PC-3 (cell line): ENCODE measurements at regions of chr3 and their contacts with region 1.

Region 1: DNA sequence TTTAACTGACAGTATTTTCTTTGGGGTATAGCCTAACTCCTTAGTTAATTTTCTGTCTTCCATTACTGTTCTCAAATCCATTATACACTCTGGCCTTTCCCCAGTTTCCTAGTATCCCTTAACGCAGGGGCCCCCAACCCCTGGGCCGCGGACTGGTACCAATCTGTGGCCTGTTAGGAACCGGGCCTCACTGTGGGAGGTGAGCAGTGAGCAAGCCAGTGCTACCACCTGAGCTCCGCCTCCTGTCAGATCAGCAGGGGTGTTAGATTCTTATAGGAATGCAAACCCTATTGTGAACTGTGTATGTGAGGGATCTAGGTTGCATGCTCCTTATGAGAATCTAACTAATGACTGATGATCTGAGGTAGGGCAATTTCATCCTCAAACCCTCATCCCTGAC is 75.1 kb downstream of the DOCK3 start:
- DNase-seq: no peak
- ATAC-seq: no peak
- H3K4me3 ChIP-seq: no peak overlapping the region
- H3K27ac ChIP-seq: no peak overlapping the region
- H3K4me1 ChIP-seq: no peaks in the 10 kb centered on the region
- H3K27me3 ChIP-seq: 0 out of 2 replicates have a peak, but pooled peaks cover 8% of the 10 kb centered on the region
- CTCF ChIP-seq: no peak

Region 2: GRCh38 chr3:50687127-50687751 is 62.6 kb before region 1 on chr3:
- CTCF ChIA-PET with region 1: no interaction called
- POLR2A ChIA-PET with region 1: no interaction called
- intact Hi-C with region 1: no loop called
- DNase-seq: no peak
- ATAC-seq: no peak
- H3K4me3 ChIP-seq: no peak overlapping the region
- H3K27ac ChIP-seq: no peak overlapping the region
- H3K4me1 ChIP-seq: no peaks in the 10 kb centered on the region
- H3K27me3 ChIP-seq: peaks cover 54% of the 10 kb centered on the region
- CTCF ChIP-seq: no peak

Region 3: DNA sequence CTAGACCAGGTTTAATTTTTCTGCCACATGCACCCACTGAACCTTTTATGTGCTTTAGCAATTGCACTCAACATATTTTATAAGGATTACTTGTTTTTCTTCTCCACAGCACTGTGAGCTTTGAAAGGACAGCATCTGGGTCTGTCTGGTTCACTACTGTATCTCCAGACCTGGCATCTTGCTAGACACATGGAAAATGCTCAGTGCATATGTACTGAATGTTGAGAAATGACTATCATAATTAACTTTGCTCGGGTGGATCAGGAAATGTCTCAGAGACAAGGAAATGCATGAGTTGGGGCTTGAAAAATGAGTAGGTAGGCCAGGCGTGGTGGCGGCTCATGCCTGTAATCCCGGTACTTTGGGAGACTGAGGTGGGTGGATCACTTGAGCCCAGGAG is 34.9 kb before region 1 on chr3:
- CTCF ChIA-PET with region 1: no interaction called
- POLR2A ChIA-PET with region 1: interaction called, 15 read pairs
- intact Hi-C with region 1: no loop called
- DNase-seq: no peak
- ATAC-seq: no peak
- H3K4me3 ChIP-seq: no peak overlapping the region
- H3K27ac ChIP-seq: no peak overlapping the region
- H3K4me1 ChIP-seq: no peaks in the 10 kb centered on the region
- H3K27me3 ChIP-seq: peaks cover 31% of the 10 kb centered on the region
- CTCF ChIP-seq: no peak